ENCODE measurements at regions of chr7 and their contacts with region 1.

Region 1: DNA sequence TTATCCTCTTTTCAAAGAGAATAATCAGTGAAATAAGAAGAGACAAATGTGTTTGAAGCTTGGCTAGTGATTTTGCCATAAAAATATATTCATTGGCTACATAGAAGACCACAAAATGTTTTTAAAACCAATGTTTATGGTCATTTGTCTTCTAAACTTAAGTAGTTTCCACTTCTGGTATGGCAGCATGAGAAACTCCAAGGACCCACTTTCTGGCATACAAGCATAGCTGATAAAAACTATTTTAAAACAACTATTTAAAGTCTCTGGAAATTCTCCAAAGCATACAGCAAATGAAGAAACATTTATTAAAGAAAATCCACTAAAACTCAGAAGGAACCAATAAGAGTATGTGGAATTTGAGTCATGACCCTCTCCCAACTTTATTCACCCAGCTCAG is 89.2 kb upstream of the TOMM7 start:
- DNase-seq: no peak
- ATAC-seq: no peak
- H3K4me3 ChIP-seq: no peak overlapping the region
- H3K27ac ChIP-seq: peak overlapping the region in 1 of 4 donors; percentile 6
- H3K4me1 ChIP-seq: peaks cover 25 to 29% of the 10 kb centered on the region in 2 donors
- H3K27me3 ChIP-seq: no peaks in the 10 kb centered on the region
- CTCF ChIP-seq: no peak
- POLR2A ChIP-seq: no peak

Region 2: GRCh38 chr7:22871661-22872060 is 40.2 kb before region 1 on chr7:
- in situ Hi-C with region 1: no loop called
- intact Hi-C with region 1: loop called (anchors 1 kb)
- DNase-seq: no peak
- ATAC-seq: no peak
- H3K4me3 ChIP-seq: no peak overlapping the region
- H3K27ac ChIP-seq: no peak overlapping the region
- H3K4me1 ChIP-seq: peaks cover 10 to 15% of the 10 kb centered on the region in 2 donors
- H3K27me3 ChIP-seq: no peaks in the 10 kb centered on the region
- CTCF ChIP-seq: no peak
- POLR2A ChIP-seq: no peak

Region 3: GRCh38 chr7:23604296-23604640 is 692.4 kb after region 1 on chr7:
- in situ Hi-C with region 1: no loop called
- intact Hi-C with region 1: no loop called
- DNase-seq: no peak
- ATAC-seq: no peak
- H3K4me3 ChIP-seq: no peak overlapping the region
- H3K27ac ChIP-seq: no peak overlapping the region
- H3K4me1 ChIP-seq: peaks cover 7 to 21% of the 10 kb centered on the region in 2 donors
- H3K27me3 ChIP-seq: no peaks in the 10 kb centered on the region
- CTCF ChIP-seq: no peak
- POLR2A ChIP-seq: no peak